Dorsolateral prefrontal cortex (tissue), 120 donors: ENCODE measurements at regions of chr14 and their contacts with region 1.

Region 1: GRCh38 chr14:50396631-50397390 is at the start of gene CDKL1:
- DNase-seq: peak in 8 of 10 donors; percentile 25 to 75 (median 48)
- H3K4me3 ChIP-seq: peak within 1 kb of the TSS; percentile 55 to 86 (median 75)
- H3K27ac ChIP-seq: peak within 1 kb of the TSS; percentile 18 to 88 (median 76)
- H3K27me3 ChIP-seq: no peaks in the 10 kb centered on the region
- CTCF ChIP-seq: peak in 2 of 56 donors; percentile 13 to 17
- total RNA-seq, gene CDKL1: 18.9 to 74.8 (median 43.2) TPM

Region 2: DNA sequence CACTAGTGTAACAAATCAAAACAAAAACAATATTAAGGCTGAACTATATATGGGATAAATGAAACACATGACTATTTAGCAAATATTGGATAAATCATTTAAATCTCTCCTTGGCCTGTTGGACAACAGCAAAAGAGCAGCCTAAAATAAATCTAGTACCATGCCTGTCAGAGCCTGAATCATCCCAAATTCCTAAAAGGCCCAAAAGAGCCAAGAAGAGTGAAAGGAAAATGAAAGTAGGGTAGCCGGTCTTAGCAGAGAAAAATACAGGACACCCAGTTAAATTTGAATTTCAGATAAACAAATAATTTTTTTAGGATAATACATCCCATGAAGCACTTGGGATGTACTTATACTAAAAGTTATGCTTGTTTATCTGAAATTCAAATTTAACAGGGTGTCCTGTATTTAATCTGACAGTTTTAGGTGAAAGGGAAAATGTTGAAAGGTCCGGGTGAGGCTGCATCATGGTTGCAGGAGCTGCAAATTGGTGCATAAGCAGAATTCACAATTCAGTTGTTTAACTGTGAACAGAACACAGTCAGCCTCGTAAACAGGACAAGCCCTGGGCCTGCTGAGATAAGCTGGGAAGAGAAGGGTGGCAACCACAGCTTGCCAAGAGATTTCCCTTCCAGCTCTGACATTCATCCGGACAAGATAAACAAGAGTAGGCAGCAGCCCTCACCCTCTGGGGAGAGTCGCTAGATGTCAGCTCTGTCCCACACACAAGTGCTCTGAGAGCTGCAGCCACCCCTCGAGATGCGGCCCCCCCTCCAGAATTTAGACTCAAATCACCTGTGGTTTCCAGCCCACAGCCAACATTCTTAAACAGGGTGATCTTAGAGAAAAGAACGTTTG is 54.4 kb before region 1 on chr14:
- intact Hi-C with region 1: loop called (anchors 5 kb)
- DNase-seq: peak; percentile 54 to 86 (median 80)
- H3K4me3 ChIP-seq: peak overlapping the region in 57 of 59 donors; percentile 5 to 59 (median 32)
- H3K27ac ChIP-seq: peak overlapping the region in 58 of 59 donors; percentile 7 to 92 (median 80)
- H3K27me3 ChIP-seq: no peaks in the 10 kb centered on the region
- CTCF ChIP-seq: peak; percentile 25 to 79 (median 58)

Region 3: DNA sequence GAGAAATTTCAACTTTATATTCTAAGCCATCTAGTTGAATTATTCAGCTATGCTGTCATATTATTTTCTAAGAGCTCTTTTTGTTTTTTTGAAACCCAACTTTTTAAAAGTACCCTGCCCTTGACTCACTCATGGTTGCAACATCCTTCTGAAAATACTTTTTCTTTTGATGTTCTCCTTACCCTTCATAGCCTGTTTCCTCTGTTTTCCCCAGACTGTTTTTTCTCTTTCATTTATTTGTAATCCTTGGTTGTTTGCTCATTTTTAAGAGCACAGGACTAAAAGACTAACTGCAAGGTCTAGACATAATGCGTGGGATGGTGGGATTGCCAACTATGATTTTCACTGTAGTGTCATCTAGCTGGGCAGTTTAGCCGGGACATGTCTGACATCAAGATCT is 21.0 kb after region 1 on chr14:
- intact Hi-C with region 1: no loop called
- DNase-seq: no peak
- H3K4me3 ChIP-seq: no peak overlapping the region
- H3K27ac ChIP-seq: no peak overlapping the region
- H3K27me3 ChIP-seq: no peaks in the 10 kb centered on the region
- CTCF ChIP-seq: no peak

Region 4: DNA sequence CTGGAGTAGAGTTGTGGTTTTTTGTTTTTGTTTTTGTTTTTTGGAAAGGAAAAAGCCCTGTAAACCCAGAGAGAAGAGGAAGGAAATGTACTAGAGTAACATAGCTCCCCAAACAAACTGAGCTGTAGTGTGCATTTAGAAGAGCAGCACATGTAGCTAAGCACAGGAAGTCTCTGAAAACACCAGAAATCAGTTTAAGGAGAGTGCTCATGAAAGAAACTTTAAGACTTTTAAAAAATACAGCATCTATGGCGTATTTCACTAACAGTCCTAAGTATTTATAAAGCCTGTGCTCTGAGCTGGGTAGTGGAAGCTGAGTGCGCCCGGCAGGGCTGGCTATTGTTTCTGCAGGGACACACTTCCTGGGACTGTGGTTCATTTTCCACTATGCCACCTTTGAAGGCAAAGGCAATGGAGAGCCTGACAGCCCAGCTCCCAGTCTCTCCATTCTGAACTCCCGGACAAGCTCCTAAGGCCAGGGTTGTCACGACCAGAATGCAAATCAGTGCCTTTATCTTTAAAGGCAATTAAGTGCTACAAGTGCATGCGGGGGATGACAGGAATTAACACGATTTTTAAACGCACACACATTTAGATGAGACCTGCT is 388.7 kb after region 1 on chr14:
- intact Hi-C with region 1: no loop called
- DNase-seq: no peak
- H3K4me3 ChIP-seq: peak overlapping the region in 11 of 59 donors; percentile 2 to 37 (median 9)
- H3K27ac ChIP-seq: peak overlapping the region in 50 of 59 donors; percentile 3 to 81 (median 52)
- H3K27me3 ChIP-seq: no peaks in the 10 kb centered on the region
- CTCF ChIP-seq: no peak